G401 (cell line): ENCODE measurements at regions of chr17 and their contacts with region 1.

Region 1: GRCh38 chr17:7035591-7036368 is at the start of gene SLC16A13:
- DNase-seq: peak; percentile 99
- total RNA-seq, gene SLC16A13: 5.3 and 9.8 TPM in 2 replicates

Region 2: GRCh38 chr17:7114875-7115614 is 79.3 kb after region 1 on chr17:
- in situ Hi-C with region 1: loop called (anchors 5 kb)
- DNase-seq: no peak